ENCODE measurements at regions of chr7 and their contacts with region 1.

Region 1: GRCh38 chr7:92833024-92833765 is 3.2 kb downstream of the CDK6 start:
- DNase-seq: peak; percentile 73 to 88 (median 84)
- ATAC-seq: peak; percentile 86
- H3K4me3 ChIP-seq: peak overlapping the region; percentile 77
- H3K4me3 Mint-ChIP-seq: peak overlapping the region; percentile 91 to 99 (median 96)
- H3K27ac ChIP-seq: peak overlapping the region; percentile 73
- H3K27ac Mint-ChIP-seq: peak overlapping the region; percentile 78 to 99 (median 90)
- H3K4me1 ChIP-seq: peaks cover 27 to 29% of the 10 kb centered on the region in 2 donors
- H3K4me1 Mint-ChIP-seq: peaks cover 12 to 60% (median 51%) of the 10 kb centered on the region in 7 donors
- H3K27me3 ChIP-seq: no peaks in the 10 kb centered on the region
- H3K27me3 Mint-ChIP-seq: peaks cover 0 to 13% (median 0%) of the 10 kb centered on the region in 5 donors

Region 2: DNA sequence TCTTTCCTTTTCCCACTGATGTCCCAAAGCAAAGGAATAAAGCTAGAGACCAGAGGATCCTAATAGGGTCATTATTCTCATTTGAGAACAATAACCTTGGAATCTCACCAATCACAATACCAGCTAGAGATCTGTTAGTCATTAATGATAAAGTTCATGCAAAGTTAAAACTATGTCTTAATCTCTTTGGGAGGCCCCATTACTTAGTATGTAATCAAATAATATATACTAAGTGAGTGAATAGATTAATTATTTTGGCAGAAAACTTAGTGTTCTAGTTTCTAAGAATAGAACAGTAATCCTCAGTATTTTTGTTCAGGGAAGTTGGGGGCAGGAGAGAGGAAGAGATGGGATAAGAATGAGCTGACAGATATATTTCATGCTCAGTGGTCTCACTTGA is 1179.9 kb before region 1 on chr7:
- CTCF ChIA-PET with region 1: no interaction called
- POLR2A ChIA-PET with region 1: no interaction called
- intact Hi-C with region 1: no loop called
- DNase-seq: no peak
- ATAC-seq: no peak
- H3K4me3 ChIP-seq: no peak overlapping the region
- H3K4me3 Mint-ChIP-seq: no peak overlapping the region
- H3K27ac ChIP-seq: no peak overlapping the region
- H3K27ac Mint-ChIP-seq: no peak overlapping the region
- H3K4me1 ChIP-seq: no peaks in the 10 kb centered on the region
- H3K4me1 Mint-ChIP-seq: no peaks in the 10 kb centered on the region
- H3K27me3 ChIP-seq: no peaks in the 10 kb centered on the region
- H3K27me3 Mint-ChIP-seq: peaks cover 0 to 16% (median 0%) of the 10 kb centered on the region in 5 donors

Region 3: GRCh38 chr7:92447345-92448204 is 385.6 kb before region 1 on chr7 and contains the start of gene GATAD1:
- CTCF ChIA-PET with region 1: no interaction called
- POLR2A ChIA-PET with region 1: no interaction called
- intact Hi-C with region 1: loop called (anchors 5 kb)
- DNase-seq: peak in 7 of 9 donors; percentile 64 to 87 (median 84)
- ATAC-seq: peak; percentile 89
- H3K4me3 ChIP-seq: peak within 1 kb of the TSS; percentile 63
- H3K4me3 Mint-ChIP-seq: peak within 1 kb of the TSS; percentile 81 to 97 (median 93)
- H3K27ac ChIP-seq: peak within 1 kb of the TSS; percentile 95
- H3K27ac Mint-ChIP-seq: peak within 1 kb of the TSS; percentile 95 to 99 (median 98)
- H3K4me1 ChIP-seq: peaks cover 9 to 14% of the 10 kb centered on the region in 2 donors
- H3K4me1 Mint-ChIP-seq: peaks cover 6 to 38% (median 17%) of the 10 kb centered on the region in 7 donors
- H3K27me3 ChIP-seq: no peaks in the 10 kb centered on the region
- H3K27me3 Mint-ChIP-seq: peaks cover 0 to 3% (median 0%) of the 10 kb centered on the region in 5 donors
- total RNA-seq, gene GATAD1: 16.4 to 34.7 (median 22.7) TPM

Region 4: GRCh38 chr7:92682903-92683539 is 150.2 kb before region 1 on chr7:
- CTCF ChIA-PET with region 1: no interaction called
- POLR2A ChIA-PET with region 1: interaction called, 12 read pairs
- intact Hi-C with region 1: loop called in 1 of 2 experiments (anchors 1 kb)
- DNase-seq: peak in 7 of 9 donors; percentile 20 to 62 (median 46)
- ATAC-seq: peak; percentile 70
- H3K4me3 ChIP-seq: no peak overlapping the region
- H3K4me3 Mint-ChIP-seq: peak overlapping the region; percentile 22 to 66 (median 58)
- H3K27ac ChIP-seq: peak overlapping the region; percentile 70
- H3K27ac Mint-ChIP-seq: peak overlapping the region; percentile 27 to 87 (median 81)
- H3K4me1 ChIP-seq: peaks cover 32 to 54% of the 10 kb centered on the region in 2 donors
- H3K4me1 Mint-ChIP-seq: peaks cover 51 to 89% (median 86%) of the 10 kb centered on the region in 7 donors
- H3K27me3 ChIP-seq: no peaks in the 10 kb centered on the region
- H3K27me3 Mint-ChIP-seq: no peaks in the 10 kb centered on the region

Region 5: GRCh38 chr7:92809397-92810241 is 23.6 kb before region 1 on chr7:
- CTCF ChIA-PET with region 1: interaction called, 5 read pairs
- POLR2A ChIA-PET with region 1: interaction called, 4 read pairs
- intact Hi-C with region 1: loop called (anchors 1 kb)
- DNase-seq: peak in 7 of 9 donors; percentile 27 to 49 (median 41)
- ATAC-seq: peak; percentile 82
- H3K4me3 ChIP-seq: peak overlapping the region; percentile 11
- H3K4me3 Mint-ChIP-seq: peak overlapping the region in 9 of 10 donors; percentile 2 to 70 (median 41)
- H3K27ac ChIP-seq: no peak overlapping the region
- H3K27ac Mint-ChIP-seq: peak overlapping the region in 4 of 9 donors; percentile 27 to 92 (median 55)
- H3K4me1 ChIP-seq: peaks cover 18 to 30% of the 10 kb centered on the region in 2 donors
- H3K4me1 Mint-ChIP-seq: peaks cover 29 to 79% (median 42%) of the 10 kb centered on the region in 7 donors
- H3K27me3 ChIP-seq: no peaks in the 10 kb centered on the region
- H3K27me3 Mint-ChIP-seq: no peaks in the 10 kb centered on the region

Region 6: DNA sequence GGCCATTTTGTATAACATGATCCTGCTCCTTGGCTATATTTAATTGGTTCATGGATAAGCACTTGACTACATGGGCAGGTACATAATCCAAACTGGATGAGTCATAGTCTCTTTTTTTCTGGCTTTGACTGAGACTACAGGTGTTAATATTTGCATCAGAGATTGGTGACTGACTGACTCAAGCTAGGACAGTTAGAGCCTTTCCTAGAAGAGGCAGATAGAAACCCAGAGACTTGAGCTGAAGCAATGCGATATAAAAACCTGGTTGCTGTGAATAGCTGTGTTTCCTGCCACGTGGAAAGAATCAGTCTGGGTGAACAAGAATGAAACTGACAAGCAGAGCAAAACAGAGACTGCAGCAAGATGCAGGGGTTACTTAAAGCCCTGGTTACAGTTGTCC is 203.6 kb after region 1 on chr7:
- CTCF ChIA-PET with region 1: no interaction called
- POLR2A ChIA-PET with region 1: no interaction called
- intact Hi-C with region 1: loop called in 1 of 2 experiments (anchors 5 kb)
- DNase-seq: no peak
- ATAC-seq: peak; percentile 36
- H3K4me3 ChIP-seq: no peak overlapping the region
- H3K4me3 Mint-ChIP-seq: peak overlapping the region in 2 of 10 donors; percentile 9 to 16
- H3K27ac ChIP-seq: no peak overlapping the region
- H3K27ac Mint-ChIP-seq: peak overlapping the region in 3 of 9 donors; percentile 6 to 78 (median 49)
- H3K4me1 ChIP-seq: peaks cover 0 to 7% of the 10 kb centered on the region in 2 donors
- H3K4me1 Mint-ChIP-seq: peaks cover 0 to 30% (median 13%) of the 10 kb centered on the region in 7 donors
- H3K27me3 ChIP-seq: no peaks in the 10 kb centered on the region
- H3K27me3 Mint-ChIP-seq: no peaks in the 10 kb centered on the region

Region 7: DNA sequence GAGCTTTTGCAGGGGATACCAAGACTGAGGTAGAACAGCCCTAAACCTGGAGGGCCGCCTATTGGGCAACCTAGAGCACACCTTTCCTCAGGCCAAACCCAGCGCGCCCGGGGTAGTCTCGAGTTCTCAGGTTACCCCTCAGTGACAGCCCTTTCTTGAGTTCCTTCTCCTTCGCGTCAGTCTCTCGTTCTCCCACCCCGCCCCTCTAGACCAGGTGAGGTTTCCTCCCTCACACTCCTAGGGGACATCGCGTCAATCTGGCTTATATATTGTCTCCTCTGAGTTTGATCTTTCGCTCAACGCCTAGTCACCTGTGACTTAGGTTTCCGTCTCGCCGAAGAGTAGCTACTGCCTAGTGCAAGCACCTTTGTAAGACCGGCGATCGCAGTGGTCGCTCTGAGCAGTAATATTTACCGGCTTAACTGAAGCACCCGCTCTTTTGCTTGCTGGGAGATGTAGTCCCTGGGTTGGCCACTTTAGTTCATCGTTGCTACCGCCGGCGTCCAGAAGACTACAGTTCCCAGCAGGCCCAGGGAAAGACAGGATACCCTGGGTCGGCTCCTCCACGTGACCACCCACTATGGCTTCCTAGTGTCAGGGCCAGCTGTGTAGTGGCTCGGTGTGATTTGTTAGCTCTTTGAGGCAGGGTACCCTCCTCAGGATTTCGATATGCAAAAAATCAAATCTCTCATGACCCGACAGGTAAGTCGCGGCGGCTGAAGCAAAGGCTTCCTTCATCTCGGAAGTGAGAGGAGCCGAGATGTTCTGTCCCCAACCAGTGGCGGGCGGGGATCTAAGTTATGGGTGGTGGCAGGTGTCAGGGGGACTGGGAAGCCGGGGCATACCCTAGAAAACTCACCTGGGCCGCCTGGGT is 398.8 kb after region 1 on chr7 and contains the start of gene VPS50:
- CTCF ChIA-PET with region 1: interaction called, 3 read pairs
- POLR2A ChIA-PET with region 1: no interaction called
- intact Hi-C with region 1: loop called (anchors 1 to 2 kb)
- DNase-seq: peak; percentile 74 to 97 (median 96)
- ATAC-seq: peak; percentile 98
- H3K4me3 ChIP-seq: peak within 1 kb of the TSS; percentile 93
- H3K4me3 Mint-ChIP-seq: peak within 1 kb of the TSS; percentile 91 to 99 (median 97)
- H3K27ac ChIP-seq: peak within 1 kb of the TSS; percentile 89
- H3K27ac Mint-ChIP-seq: peak within 1 kb of the TSS; percentile 93 to 99 (median 98)
- H3K4me1 ChIP-seq: peaks cover 6% of the 10 kb centered on the region in 2 donors
- H3K4me1 Mint-ChIP-seq: peaks cover 5 to 38% (median 21%) of the 10 kb centered on the region in 7 donors
- H3K27me3 ChIP-seq: no peaks in the 10 kb centered on the region
- H3K27me3 Mint-ChIP-seq: peaks cover 0 to 12% (median 0%) of the 10 kb centered on the region in 5 donors
- total RNA-seq, gene VPS50: 19.8 to 44.2 (median 36.8) TPM